Head of caudate nucleus (tissue), 42 donors: ENCODE measurements at regions of chr4 and their contacts with region 1.

Region 1: GRCh38 chr4:84582302-84583000 is 476 bp upstream of the CDS1 start:
- DNase-seq: peak; percentile 79 to 97 (median 92)

Region 2: DNA sequence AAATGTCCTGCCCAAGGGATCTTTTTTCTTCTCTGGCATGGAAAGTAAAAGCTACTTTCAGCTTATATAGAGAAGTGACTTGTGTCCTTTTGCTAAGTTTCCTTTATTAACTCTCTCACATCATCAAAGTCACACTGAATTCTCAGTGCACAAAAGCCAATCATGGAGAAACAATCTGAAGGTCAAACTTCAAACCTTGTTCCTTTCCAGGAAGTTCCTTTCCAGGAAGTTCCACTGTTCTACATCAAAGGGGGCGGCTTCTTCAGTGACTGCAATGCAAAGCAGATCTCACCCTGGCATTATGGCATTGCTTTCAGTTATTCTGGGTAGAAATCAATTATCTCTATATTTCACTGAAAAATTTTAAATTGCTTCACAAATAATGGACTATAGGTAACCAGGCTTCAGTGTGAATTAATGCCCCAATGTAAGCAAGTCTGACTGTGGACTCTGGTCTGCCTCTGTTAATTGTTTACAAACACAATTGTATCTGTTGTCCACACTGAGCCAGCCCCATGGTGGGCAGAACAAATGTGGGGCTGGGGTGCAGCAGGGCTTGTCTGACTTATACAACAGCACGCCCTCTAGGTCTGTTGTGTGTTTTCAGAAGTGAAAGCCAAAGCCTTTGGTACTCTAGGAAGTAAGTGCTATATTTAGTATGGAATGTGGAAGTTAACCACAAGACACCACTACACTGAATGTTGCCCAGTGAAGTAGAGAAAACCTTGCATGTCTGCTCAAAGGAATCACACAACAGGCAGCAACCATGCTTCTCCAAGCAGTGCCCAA is 99.2 kb after region 1 on chr4:
- intact Hi-C with region 1: loop called (anchors 10 kb)
- DNase-seq: peak in 10 of 42 donors; percentile 16 to 62 (median 36)

Region 3: DNA sequence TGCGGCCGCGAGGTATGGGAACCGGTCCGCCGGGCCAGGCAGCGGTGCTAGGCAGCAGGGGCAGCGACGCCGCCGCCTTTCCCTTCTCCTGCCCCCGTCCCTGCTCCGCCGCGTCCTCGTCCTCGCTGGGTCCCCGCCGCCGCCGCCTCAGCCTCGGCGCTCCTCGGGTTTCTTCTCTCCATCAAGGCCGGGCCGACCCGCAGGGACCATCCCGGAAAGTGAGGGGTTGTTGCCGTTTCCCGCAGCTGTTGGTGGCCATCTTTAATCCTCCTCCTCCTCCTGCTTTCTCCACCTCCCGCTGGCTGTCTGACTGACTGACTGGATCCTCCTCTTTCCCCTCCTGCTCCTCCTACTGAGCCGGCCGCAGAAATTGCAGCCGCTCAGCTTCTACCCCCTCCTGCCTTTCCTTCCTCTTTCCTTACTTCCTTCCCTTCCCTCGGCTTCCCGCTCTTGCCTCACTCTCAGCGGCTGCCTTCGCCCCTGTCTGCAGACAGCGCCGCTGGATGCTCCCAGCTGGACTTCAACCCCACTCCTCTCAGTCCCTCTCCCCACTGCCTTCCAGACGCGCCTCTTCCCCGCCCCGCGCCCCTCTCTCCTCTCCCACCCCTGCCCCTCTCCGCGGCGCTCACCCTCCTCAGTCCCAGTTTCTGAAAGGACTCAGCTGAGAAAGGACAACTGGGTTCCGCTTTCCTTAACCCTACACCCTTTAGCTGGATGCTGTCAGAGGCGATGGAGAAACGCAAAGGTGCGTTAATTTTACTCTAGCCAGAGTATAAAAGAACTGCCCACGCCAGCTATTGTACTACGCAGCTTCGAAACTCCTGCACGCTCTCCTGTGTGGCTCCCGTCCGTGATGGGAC is 384.2 kb after region 1 on chr4 and contains the start of gene WDFY3:
- intact Hi-C with region 1: loop called (anchors 10 kb)
- DNase-seq: peak; percentile 69 to 97 (median 88)